B cell (primary cell): ENCODE measurements at regions of chr14 and their contacts with region 1.

Region 1: GRCh38 chr14:101707068-101707842 is 54.3 kb upstream of the PPP2R5C start:
- DNase-seq: peak; percentile 89
- ATAC-seq: peak; percentile 71
- H3K4me3 ChIP-seq: peak overlapping the region in 1 of 5 experiments; percentile 5
- H3K4me3 Mint-ChIP-seq: peak overlapping the region; percentile 65
- H3K27ac ChIP-seq: no peak overlapping the region
- H3K27ac Mint-ChIP-seq: peak overlapping the region; percentile 53
- H3K4me1 ChIP-seq: peaks cover 19 to 23% of the 10 kb centered on the region in 2 donors
- H3K4me1 Mint-ChIP-seq: peaks cover 22% of the 10 kb centered on the region
- H3K27me3 ChIP-seq: peaks cover 0 to 7% (median 1%) of the 10 kb centered on the region in 4 experiments
- H3K27me3 Mint-ChIP-seq: peaks cover 18% of the 10 kb centered on the region
- CTCF ChIP-seq: peak; percentile 90

Region 2: DNA sequence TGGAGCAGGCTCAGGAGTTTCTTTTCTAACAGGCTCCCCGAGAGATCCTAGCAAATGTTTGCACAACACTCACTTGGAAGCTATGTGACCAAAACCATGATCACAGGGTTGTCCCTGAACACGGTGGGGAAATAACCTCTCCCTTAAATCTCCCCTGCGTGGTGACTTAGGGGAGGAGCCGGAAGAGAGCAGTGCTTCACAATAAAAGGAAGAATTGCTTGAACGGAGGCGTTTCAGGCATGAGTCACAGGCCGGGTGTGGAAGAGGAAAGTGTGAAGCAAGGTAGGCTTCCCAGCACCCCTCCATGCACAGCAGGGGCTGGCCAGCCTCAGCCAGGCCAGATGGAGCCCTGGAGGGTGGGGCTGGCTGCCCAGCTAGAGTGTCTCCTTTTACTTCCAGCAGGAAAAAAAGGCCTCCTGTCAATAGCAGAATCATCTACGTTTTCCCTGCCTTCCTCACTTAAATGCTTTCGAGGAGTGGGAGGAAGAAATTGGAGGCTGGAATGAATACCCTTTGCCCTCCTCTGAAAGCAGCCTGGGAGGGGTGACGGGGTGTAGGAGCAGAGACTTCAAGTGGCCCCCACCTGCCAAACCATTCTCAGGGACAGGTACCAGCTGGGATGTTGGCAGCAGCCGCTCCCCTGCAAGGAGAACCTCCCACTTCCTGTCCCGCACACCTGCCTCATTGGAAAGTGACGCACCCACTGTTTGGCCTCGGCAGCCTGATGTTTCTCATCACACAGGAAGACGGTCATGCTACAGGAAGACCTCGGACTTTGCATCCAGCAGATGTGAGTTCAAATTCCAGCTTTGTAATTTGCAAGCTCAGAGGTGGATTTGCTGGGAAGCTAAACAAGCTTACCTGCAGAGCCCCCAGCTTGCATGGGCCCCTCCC is 24.2 kb after region 1 on chr14:
- CTCF ChIA-PET with region 1: interaction called, 11 read pairs
- POLR2A ChIA-PET with region 1: no interaction called
- intact Hi-C with region 1: no loop called
- DNase-seq: peak; percentile 70
- ATAC-seq: peak; percentile 95
- H3K4me3 ChIP-seq: no peak overlapping the region
- H3K4me3 Mint-ChIP-seq: peak overlapping the region; percentile 62
- H3K27ac ChIP-seq: no peak overlapping the region
- H3K27ac Mint-ChIP-seq: peak overlapping the region; percentile 71
- H3K4me1 ChIP-seq: peaks cover 13 to 18% of the 10 kb centered on the region in 2 donors
- H3K4me1 Mint-ChIP-seq: peaks cover 16% of the 10 kb centered on the region
- H3K27me3 ChIP-seq: no peaks in the 10 kb centered on the region
- H3K27me3 Mint-ChIP-seq: no peaks in the 10 kb centered on the region
- CTCF ChIP-seq: no peak

Region 3: DNA sequence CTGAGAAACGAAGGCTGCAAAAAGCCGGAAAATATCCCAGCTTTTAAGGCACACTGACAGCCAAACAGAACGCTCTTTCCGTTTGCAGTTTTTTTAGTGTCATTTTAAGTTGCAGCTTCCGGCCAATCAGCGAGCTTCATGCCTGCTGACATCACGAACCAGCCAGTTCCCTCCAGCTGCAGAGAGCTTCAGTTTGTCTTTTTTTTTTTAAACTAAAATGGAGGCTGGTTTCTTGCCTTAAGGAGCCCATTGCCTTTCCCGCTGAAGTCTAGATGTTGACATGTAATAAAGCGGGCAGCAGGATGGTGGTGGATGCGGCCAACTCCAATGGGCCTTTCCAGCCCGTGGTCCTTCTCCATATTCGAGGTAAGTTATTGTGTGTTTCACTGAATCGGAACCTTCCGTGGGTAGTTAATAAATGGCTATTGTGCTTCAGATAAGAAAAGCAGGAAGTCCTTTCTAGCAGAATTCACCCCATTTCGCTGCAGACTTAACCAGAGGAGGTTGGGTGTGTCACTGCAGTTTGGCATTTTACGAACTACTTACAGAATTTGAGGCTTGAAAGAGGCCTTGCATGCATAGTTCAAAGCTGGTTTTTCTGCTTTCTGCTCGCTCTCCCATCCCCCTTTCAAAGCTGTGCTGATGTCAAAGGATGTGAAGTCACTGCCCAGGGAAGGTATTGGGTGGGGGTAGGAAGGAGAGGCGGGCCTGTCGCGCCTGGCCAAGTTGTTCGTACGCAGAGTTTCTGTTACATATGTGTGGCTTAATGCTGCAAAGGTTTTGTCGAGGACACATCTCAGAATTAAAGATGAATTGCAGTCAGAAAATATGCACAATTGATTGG is 102.6 kb after region 1 on chr14:
- CTCF ChIA-PET with region 1: interaction called, 10 read pairs
- POLR2A ChIA-PET with region 1: interaction called, 6 read pairs
- intact Hi-C with region 1: no loop called
- DNase-seq: peak; percentile 93
- ATAC-seq: peak; percentile 93
- H3K4me3 ChIP-seq: peak overlapping the region; percentile 80 to 100 (median 97)
- H3K4me3 Mint-ChIP-seq: peak overlapping the region; percentile 92
- H3K27ac ChIP-seq: peak overlapping the region; percentile 95 to 100
- H3K27ac Mint-ChIP-seq: peak overlapping the region; percentile 98
- H3K4me1 ChIP-seq: peaks cover 39 to 43% of the 10 kb centered on the region in 2 donors
- H3K4me1 Mint-ChIP-seq: peaks cover 45% of the 10 kb centered on the region
- H3K27me3 ChIP-seq: no peaks in the 10 kb centered on the region
- H3K27me3 Mint-ChIP-seq: no peaks in the 10 kb centered on the region
- CTCF ChIP-seq: no peak

Region 4: GRCh38 chr14:101889898-101890297 is 182.6 kb after region 1 on chr14:
- CTCF ChIA-PET with region 1: interaction called, 5 read pairs
- POLR2A ChIA-PET with region 1: no interaction called
- intact Hi-C with region 1: loop called (anchors 1 kb)
- DNase-seq: peak; percentile 27
- ATAC-seq: no peak
- H3K4me3 ChIP-seq: no peak overlapping the region
- H3K4me3 Mint-ChIP-seq: no peak overlapping the region
- H3K27ac ChIP-seq: no peak overlapping the region
- H3K27ac Mint-ChIP-seq: no peak overlapping the region
- H3K4me1 ChIP-seq: no peaks in the 10 kb centered on the region
- H3K4me1 Mint-ChIP-seq: no peaks in the 10 kb centered on the region
- H3K27me3 ChIP-seq: no peaks in the 10 kb centered on the region
- H3K27me3 Mint-ChIP-seq: no peaks in the 10 kb centered on the region
- CTCF ChIP-seq: peak; percentile 19

Region 5: DNA sequence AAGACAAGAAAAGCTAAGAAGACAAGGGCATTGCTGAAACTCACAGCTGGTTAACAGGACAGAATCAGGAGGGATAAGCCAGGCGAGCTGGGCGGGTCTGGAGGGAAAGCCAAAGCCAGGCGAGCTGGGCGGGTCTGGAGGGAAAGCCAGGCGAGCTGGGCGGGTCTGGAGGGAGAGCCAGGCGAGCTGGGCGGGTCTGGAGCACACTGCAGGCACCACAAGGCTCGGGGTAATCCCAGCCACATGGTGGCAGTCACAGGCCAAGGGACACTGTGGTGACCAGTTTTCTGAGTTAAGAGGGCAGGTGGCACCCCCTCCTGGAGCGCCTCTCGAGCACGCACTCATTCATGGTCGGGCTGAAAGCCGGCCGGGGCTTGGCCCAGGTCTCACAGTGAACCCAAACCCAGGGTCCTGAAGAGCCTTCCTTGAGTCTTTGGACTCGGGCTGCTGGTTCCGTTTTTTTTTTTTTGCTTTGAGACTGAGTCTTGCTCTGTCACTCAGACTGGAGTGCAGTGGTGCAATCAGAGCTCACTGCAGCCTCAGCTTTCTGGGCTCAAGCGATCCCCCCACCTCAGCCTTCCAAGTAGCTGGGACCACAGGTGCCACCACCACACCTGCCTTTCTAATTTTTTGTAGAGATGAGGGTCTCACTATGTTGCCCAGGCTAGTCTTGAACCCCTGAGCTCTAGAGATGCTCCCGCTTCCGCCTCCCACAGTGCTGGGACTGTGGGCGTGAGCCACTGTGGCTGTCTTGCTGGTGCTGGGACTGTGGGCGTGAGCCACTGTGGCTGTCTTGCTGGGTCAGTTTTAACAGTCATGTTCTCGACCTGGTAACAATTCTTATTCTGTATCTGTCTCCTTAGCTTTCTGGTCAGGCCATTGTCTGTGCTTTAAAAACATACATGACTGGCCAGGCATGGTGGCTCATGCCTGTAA is 339.4 kb after region 1 on chr14:
- CTCF ChIA-PET with region 1: interaction called, 10 read pairs
- POLR2A ChIA-PET with region 1: no interaction called
- intact Hi-C with region 1: loop called (anchors 5 kb)
- DNase-seq: peak; percentile 41
- ATAC-seq: peak; percentile 61
- H3K4me3 ChIP-seq: no peak overlapping the region
- H3K4me3 Mint-ChIP-seq: no peak overlapping the region
- H3K27ac ChIP-seq: no peak overlapping the region
- H3K27ac Mint-ChIP-seq: no peak overlapping the region
- H3K4me1 ChIP-seq: no peaks in the 10 kb centered on the region
- H3K4me1 Mint-ChIP-seq: no peaks in the 10 kb centered on the region
- H3K27me3 ChIP-seq: no peaks in the 10 kb centered on the region
- H3K27me3 Mint-ChIP-seq: no peaks in the 10 kb centered on the region
- CTCF ChIP-seq: peak; percentile 22